CD4-positive, alpha-beta T cell (primary cell): ENCODE measurements at regions of chr19 and their contacts with region 1.

Region 1: DNA sequence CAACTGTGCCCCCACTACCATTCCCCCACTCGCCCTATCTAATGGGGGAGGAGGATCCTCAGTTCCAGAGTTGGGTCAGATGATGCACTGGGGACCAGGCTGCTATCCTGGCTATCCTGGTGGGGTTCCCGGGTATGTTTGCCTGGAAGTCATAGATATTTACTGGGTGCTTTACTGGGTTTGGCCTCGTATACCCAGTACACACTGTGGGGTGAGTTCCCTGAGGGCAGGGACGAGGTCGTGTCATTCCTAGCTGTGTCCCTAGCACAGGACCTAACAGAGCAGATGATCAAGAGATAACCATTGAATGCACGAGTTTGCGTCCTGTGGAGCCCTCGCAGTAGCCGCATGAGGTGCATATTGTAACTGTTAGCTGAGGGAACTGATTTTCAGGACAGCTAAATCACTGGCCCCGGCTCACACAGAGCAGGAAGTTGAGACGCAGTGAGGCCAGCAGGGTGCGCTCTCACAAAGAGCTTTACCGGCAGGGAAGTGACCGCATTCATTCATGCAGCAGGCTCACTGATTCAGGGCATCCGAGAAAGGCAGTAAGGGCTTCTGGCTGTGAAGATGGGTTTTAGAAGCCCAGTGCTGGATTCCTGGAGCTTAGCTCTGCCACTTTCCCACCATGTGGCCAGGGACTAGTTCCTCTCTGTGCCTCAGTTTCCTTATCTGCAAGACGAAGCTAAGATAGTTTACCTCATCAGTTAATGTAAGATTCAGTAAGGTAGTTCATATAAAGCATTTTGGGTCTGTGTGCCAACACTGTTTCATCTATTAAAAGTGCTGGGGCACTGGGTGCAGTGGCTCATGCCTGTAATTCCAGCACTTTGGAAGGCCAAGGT is 6.0 kb downstream of the RUVBL2 start:
- DNase-seq: peak; percentile 61 to 82 (median 68)
- ATAC-seq: peak; percentile 94
- H3K4me3 ChIP-seq: no peak overlapping the region
- H3K4me3 Mint-ChIP-seq: no peak overlapping the region
- H3K27ac ChIP-seq: no peak overlapping the region
- H3K27ac Mint-ChIP-seq: no peak overlapping the region
- H3K4me1 ChIP-seq: peaks cover 13% of the 10 kb centered on the region
- H3K4me1 Mint-ChIP-seq: peaks cover 24% of the 10 kb centered on the region
- H3K27me3 ChIP-seq: no peaks in the 10 kb centered on the region
- H3K27me3 Mint-ChIP-seq: no peaks in the 10 kb centered on the region
- CTCF ChIP-seq: peak; percentile 63

Region 2: DNA sequence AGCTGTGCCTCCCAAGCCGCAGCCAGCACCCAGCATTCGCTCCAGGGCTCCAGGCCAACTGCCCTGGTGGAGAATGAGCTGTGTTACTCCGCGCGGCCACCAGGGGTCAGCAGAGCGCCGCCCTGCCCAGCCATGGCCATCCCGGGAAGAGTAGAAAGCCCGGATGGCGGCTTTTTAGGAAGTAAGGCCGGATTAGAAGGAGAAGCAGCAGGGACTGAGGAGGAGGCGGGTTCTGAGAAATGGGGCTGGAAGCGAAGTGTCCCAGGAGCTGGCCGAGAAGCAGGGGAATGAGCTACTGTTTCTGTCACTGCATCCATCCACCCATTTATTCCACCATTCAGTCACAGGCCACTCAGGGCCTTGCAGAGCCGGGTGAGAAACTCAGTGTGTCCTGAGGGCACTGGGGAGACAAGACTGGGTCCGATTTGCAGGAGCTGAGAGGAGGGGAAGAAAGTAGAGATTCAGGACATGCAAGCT is 1986.6 kb before region 1 on chr19:
- CTCF ChIA-PET with region 1: no interaction called
- POLR2A ChIA-PET with region 1: no interaction called
- intact Hi-C with region 1: no loop called
- DNase-seq: peak; percentile 35 to 80 (median 58)
- ATAC-seq: peak; percentile 92
- H3K4me3 ChIP-seq: no peak overlapping the region
- H3K4me3 Mint-ChIP-seq: no peak overlapping the region
- H3K27ac ChIP-seq: no peak overlapping the region
- H3K27ac Mint-ChIP-seq: no peak overlapping the region
- H3K4me1 ChIP-seq: peaks cover 8% of the 10 kb centered on the region
- H3K4me1 Mint-ChIP-seq: peaks cover 8% of the 10 kb centered on the region
- H3K27me3 ChIP-seq: no peaks in the 10 kb centered on the region
- H3K27me3 Mint-ChIP-seq: peaks cover 10% of the 10 kb centered on the region
- CTCF ChIP-seq: peak; percentile 99

Region 3: DNA sequence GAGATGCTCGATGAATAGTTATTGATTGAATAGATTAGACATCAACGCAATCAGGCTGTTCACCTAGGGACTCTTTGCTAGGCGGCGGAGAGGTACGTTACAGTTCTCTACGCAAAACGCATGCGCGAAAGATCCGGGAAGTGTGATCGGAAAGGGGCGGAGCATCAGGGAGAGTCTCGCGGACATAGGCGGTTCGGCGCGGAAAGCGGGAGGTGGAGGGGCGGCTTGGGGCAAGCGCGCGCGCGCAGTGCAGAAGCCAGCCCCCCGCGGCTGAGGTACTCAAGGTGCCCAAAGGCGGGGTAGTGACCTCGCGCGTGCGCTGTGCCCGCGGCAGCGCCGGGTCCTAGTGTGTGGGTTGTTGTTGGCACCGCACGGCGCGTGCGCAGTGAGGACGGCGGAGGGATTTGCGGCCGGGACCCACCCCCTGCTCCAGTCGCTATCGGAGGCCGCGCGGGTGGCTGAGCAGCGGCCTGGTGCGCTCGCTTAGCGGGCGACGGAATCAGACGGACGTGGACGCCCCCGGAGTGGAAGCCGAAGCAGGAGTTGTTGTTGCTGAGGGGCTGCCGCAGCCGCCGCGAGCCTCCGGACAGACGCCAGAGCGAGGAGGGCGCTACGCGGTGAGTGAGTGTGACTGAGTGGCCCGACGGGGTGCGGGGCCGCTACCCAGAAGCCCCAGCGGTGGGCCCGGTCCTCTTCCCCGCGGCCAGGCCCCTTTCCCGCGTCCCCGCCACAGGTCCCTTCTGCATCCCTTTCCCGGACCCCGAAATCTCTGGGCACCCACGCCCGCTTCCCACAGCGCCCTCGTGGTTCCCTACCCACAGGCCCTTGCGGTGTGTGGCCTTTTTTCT is 85.5 kb after region 1 on chr19 and contains the start of gene SNRNP70:
- CTCF ChIA-PET with region 1: interaction called, 3 read pairs
- POLR2A ChIA-PET with region 1: no interaction called
- intact Hi-C with region 1: loop called in 1 of 2 experiments (anchors 5 kb)
- DNase-seq: peak; percentile 96 to 100 (median 99)
- ATAC-seq: peak; percentile 92
- H3K4me3 ChIP-seq: peak within 1 kb of the TSS; percentile 94
- H3K4me3 Mint-ChIP-seq: peak within 1 kb of the TSS; percentile 86
- H3K27ac ChIP-seq: peak within 1 kb of the TSS; percentile 68 to 75
- H3K27ac Mint-ChIP-seq: peak within 1 kb of the TSS; percentile 87
- H3K4me1 ChIP-seq: peaks cover 45% of the 10 kb centered on the region
- H3K4me1 Mint-ChIP-seq: peaks cover 36% of the 10 kb centered on the region
- H3K27me3 ChIP-seq: no peaks in the 10 kb centered on the region
- H3K27me3 Mint-ChIP-seq: peaks cover 5% of the 10 kb centered on the region
- CTCF ChIP-seq: no peak
- total RNA-seq, gene SNRNP70: 375 to 397 TPM

Region 4: DNA sequence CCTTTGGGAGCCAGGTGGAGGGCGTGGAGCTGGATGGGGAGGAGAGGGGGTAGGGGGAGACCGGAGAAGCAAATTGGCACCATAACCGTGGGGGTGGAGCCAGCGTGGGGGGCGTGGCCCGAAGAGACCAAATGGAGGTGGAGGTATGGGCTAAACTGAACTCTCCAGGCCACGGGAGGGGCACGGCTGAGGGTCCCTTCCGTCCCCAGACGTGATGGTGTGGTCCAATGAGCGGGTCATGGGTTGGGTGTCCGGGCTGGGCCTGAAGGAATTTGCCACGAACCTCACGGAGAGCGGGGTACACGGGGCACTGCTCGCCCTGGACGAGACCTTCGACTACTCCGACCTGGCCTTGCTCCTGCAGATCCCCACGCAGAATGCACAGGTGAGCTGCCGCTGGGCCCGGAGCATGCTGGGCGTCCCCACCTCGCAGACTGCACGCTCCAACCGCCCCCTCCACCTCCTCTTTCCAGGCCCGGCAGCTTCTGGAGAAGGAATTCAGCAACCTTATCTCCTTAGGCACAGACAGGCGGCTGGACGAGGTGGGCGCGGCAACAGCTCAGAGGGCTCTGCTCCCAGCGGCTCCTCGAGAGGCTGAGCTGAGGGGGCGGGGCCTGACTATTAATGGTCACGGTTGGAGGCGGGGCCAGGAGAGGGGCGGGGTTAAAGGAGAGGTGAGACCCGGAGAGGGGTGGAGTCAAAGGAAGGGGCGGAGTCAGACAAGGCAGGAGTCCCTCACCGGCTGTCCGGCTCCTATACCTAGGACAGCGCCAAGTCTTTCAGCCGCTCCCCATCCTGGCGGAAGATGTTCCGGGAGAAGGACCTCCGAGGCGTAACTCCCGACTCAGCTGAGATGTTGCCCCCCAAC is 149.3 kb after region 1 on chr19:
- CTCF ChIA-PET with region 1: no interaction called
- POLR2A ChIA-PET with region 1: no interaction called
- intact Hi-C with region 1: loop called (anchors 1 to 5 kb)
- DNase-seq: peak; percentile 50 to 88 (median 72)
- ATAC-seq: peak; percentile 44
- H3K4me3 ChIP-seq: peak overlapping the region; percentile 62
- H3K4me3 Mint-ChIP-seq: peak overlapping the region; percentile 86
- H3K27ac ChIP-seq: no peak overlapping the region
- H3K27ac Mint-ChIP-seq: no peak overlapping the region
- H3K4me1 ChIP-seq: peaks cover 49% of the 10 kb centered on the region
- H3K4me1 Mint-ChIP-seq: peaks cover 52% of the 10 kb centered on the region
- H3K27me3 ChIP-seq: peaks cover 55 to 56% of the 10 kb centered on the region in 2 experiments
- H3K27me3 Mint-ChIP-seq: peaks cover 88% of the 10 kb centered on the region
- CTCF ChIP-seq: no peak

Region 5: GRCh38 chr19:49200238-49200862 is 200.6 kb after region 1 on chr19:
- CTCF ChIA-PET with region 1: interaction called, 7 read pairs
- POLR2A ChIA-PET with region 1: no interaction called
- intact Hi-C with region 1: loop called in 1 of 2 experiments (anchors 1 kb)
- DNase-seq: peak in 2 of 14 experiments; percentile 22 to 50
- ATAC-seq: no peak
- H3K4me3 ChIP-seq: no peak overlapping the region
- H3K4me3 Mint-ChIP-seq: no peak overlapping the region
- H3K27ac ChIP-seq: no peak overlapping the region
- H3K27ac Mint-ChIP-seq: no peak overlapping the region
- H3K4me1 ChIP-seq: no peaks in the 10 kb centered on the region
- H3K4me1 Mint-ChIP-seq: no peaks in the 10 kb centered on the region
- H3K27me3 ChIP-seq: no peaks in the 10 kb centered on the region
- H3K27me3 Mint-ChIP-seq: peaks cover 10% of the 10 kb centered on the region
- CTCF ChIP-seq: no peak